ENCODE measurements at regions of chr16 and their contacts with region 1.

Region 1: DNA sequence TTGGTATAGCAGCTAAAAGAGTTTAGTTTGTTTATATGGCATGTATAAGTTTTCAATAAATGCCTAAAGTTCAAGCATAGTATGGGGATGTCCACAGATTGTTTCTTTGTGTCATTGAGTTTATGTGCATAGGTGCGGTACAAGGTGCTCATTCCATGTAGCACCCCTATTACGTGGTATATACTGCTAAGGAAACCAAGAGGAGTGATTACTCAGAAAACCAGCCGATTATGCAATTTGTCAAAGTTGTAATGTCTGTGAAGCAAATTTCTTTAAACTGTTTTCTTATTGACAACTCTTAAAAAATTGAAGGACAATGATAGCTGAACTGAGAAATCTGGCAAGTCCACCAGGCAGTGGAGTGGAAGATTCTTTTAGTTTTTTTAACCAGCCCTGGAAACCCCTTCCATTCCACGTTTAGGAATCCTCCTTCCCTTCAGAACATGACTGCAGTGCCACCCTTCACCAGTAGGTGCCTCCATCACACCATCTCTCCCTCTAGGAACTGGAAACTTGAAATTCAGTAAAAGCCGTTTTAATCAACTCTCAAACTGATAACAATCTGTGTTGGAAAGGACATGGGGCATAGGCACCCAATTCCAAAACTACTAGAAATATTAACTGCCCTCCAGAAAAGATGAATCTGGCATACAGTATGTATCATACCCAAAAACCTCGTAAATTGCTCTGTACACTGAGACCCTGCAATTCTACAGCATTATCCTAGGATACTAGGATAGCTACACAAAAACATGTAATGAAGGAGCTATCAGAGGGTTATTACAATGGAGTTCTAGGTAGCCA is 43.5 kb downstream of the REXO5 start:
- DNase-seq: peak; percentile 79
- ATAC-seq: peak; percentile 48; the same call in 1 of the 2 replicates
- H3K4me3 Mint-ChIP-seq: no peak overlapping the region
- H3K27ac Mint-ChIP-seq: no peak overlapping the region
- H3K4me1 Mint-ChIP-seq: no peaks in the 10 kb centered on the region
- H3K27me3 Mint-ChIP-seq: no peaks in the 10 kb centered on the region
- CTCF ChIP-seq: peak; percentile 94

Region 2: GRCh38 chr16:21001262-21001661 is 151.5 kb after region 1 on chr16:
- CTCF ChIA-PET with region 1: interaction called, 19 read pairs
- POLR2A ChIA-PET with region 1: no interaction called
- DNase-seq: peak; percentile 64
- ATAC-seq: peak; percentile 85
- H3K4me3 Mint-ChIP-seq: no peak overlapping the region
- H3K27ac Mint-ChIP-seq: no peak overlapping the region
- H3K4me1 Mint-ChIP-seq: no peaks in the 10 kb centered on the region
- H3K27me3 Mint-ChIP-seq: no peaks in the 10 kb centered on the region
- CTCF ChIP-seq: no peak; the same call in 1 of the 2 replicates

Region 3: DNA sequence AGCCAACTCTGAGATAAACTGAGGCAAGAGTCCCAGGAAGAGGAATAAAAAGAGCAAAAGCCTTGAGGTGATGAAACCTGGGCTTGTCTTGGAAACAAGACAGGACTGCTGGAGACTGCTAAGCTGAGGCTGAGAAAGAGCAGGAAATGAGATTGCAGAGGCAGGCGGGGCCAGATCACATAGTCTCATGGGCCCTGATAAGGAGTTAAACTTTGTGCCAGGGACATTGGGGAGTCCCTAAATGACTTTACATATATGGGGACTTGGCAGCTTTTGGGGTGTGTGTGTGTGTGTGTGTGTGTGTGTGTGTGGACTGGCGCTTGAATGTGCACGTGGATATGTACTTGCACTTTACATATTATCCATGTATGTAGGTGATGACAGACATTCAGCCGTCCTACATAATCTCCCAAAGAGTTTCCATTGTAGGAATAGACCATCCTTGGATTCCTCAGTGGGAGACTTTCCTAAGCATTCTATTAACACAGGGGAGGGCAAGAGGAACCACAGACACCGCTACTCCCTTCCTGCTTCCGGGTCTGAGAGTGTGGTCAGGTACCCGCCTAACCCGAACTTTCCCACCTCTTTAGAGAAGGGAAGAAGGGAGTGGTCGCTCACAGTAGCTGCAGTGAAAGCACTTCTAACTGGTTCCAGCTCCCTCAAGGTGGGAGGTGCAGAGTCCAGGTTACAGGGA is 173.9 kb after region 1 on chr16:
- CTCF ChIA-PET with region 1: no interaction called
- POLR2A ChIA-PET with region 1: no interaction called
- DNase-seq: no peak
- ATAC-seq: no peak
- H3K4me3 Mint-ChIP-seq: no peak overlapping the region
- H3K27ac Mint-ChIP-seq: no peak overlapping the region
- H3K4me1 Mint-ChIP-seq: 0 out of 2 replicates have a peak, but pooled peaks cover 3% of the 10 kb centered on the region
- H3K27me3 Mint-ChIP-seq: no peaks in the 10 kb centered on the region
- CTCF ChIP-seq: no peak

Region 4: GRCh38 chr16:21033704-21034103 is 183.9 kb after region 1 on chr16:
- CTCF ChIA-PET with region 1: no interaction called
- POLR2A ChIA-PET with region 1: no interaction called
- DNase-seq: no peak
- ATAC-seq: no peak
- H3K4me3 Mint-ChIP-seq: no peak overlapping the region
- H3K27ac Mint-ChIP-seq: no peak overlapping the region
- H3K4me1 Mint-ChIP-seq: peaks cover 5% of the 10 kb centered on the region
- H3K27me3 Mint-ChIP-seq: no peaks in the 10 kb centered on the region
- CTCF ChIP-seq: no peak

Region 5: DNA sequence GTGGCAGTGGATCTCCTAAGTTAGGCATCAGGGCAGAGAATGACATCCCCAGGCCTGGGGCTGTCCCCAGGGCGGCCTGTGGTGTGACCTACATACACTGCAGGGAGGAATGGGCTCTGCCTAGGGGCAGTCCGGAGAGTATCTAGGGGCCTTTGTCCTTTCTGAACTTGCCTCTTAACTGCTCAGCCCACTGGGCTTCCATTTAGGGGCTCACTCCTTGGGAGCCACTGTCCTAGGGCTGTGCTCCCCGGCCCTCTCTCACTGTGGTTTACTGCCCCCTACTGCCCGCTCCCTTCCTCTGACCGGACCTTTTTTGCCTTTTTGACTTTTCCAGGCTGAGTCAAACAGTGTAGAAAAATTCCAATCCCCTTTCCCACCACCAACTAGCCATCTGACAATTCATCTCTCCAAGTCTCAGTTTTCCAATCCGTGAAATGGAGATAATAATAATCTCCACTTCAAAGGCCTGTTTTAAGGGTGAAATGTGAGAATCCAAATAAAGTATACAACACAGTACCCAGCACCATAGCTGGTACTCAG is 234.0 kb after region 1 on chr16:
- CTCF ChIA-PET with region 1: interaction called, 27 read pairs
- POLR2A ChIA-PET with region 1: no interaction called
- DNase-seq: peak; percentile 81
- ATAC-seq: peak; percentile 98
- H3K4me3 Mint-ChIP-seq: no peak overlapping the region
- H3K27ac Mint-ChIP-seq: 0 out of 2 replicates have a peak overlapping the region, but pooled peaks have one; percentile 18
- H3K4me1 Mint-ChIP-seq: 0 out of 2 replicates have a peak, but pooled peaks cover 3% of the 10 kb centered on the region
- H3K27me3 Mint-ChIP-seq: no peaks in the 10 kb centered on the region
- CTCF ChIP-seq: peak; percentile 71

Region 6: DNA sequence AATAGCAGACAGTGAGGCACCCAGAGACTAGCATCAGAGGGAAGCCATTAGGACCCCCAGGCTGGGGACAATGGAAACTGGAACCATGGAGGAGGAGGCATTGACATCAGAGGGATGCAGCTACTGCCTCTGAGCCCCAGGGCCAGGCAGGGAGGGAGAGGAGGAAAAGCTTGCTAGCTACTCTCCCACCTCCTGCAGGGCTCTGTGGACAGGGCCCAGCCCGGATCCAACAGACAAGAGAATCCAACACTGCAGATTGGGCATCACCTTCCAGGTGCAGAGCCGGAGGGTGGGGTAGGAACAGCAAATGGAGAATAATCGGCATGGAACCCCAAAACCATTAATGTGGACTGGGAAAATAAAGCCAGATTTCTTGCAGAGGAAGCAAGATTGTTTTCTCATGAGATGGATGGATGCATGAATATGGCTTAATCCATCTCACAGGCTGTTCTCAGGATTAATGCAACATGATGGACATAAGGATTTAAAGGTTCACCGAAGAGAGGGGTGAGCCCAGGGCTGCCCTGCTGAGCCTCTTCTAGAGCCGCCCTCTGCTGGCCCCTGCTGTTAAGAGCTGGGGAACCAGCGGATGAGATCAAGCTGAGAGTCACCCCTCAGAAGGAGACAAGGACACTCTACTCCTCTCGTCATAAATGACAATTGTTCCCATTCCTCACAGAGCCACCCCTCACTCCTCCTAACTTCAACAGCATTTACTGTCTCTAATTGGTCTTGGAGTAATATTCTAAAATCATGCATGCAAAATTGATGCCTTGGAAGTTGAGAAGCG is 252.0 kb after region 1 on chr16:
- CTCF ChIA-PET with region 1: interaction called, 22 read pairs
- POLR2A ChIA-PET with region 1: no interaction called
- DNase-seq: peak; percentile 48
- ATAC-seq: peak; percentile 88
- H3K4me3 Mint-ChIP-seq: no peak overlapping the region
- H3K27ac Mint-ChIP-seq: no peak overlapping the region
- H3K4me1 Mint-ChIP-seq: peaks cover 14% of the 10 kb centered on the region
- H3K27me3 Mint-ChIP-seq: no peaks in the 10 kb centered on the region
- CTCF ChIP-seq: peak; percentile 3; the same call in 1 of the 2 replicates